Calu3 (cell line): ENCODE measurements at regions of chr17 and their contacts with region 1.

Region 1: GRCh38 chr17:44219616-44220212 is at the start of gene UBTF:
- DNase-seq: peak; percentile 83
- H3K4me3 Mint-ChIP-seq: peak within 1 kb of the TSS; percentile 86
- H3K27ac Mint-ChIP-seq: peak within 1 kb of the TSS; percentile 79
- H3K4me1 Mint-ChIP-seq: peaks cover 37% of the 10 kb centered on the region
- H3K27me3 Mint-ChIP-seq: no peaks in the 10 kb centered on the region
- CTCF ChIP-seq: no peak
- total RNA-seq, gene UBTF: 92.1 and 94.2 TPM in 2 replicates

Region 2: DNA sequence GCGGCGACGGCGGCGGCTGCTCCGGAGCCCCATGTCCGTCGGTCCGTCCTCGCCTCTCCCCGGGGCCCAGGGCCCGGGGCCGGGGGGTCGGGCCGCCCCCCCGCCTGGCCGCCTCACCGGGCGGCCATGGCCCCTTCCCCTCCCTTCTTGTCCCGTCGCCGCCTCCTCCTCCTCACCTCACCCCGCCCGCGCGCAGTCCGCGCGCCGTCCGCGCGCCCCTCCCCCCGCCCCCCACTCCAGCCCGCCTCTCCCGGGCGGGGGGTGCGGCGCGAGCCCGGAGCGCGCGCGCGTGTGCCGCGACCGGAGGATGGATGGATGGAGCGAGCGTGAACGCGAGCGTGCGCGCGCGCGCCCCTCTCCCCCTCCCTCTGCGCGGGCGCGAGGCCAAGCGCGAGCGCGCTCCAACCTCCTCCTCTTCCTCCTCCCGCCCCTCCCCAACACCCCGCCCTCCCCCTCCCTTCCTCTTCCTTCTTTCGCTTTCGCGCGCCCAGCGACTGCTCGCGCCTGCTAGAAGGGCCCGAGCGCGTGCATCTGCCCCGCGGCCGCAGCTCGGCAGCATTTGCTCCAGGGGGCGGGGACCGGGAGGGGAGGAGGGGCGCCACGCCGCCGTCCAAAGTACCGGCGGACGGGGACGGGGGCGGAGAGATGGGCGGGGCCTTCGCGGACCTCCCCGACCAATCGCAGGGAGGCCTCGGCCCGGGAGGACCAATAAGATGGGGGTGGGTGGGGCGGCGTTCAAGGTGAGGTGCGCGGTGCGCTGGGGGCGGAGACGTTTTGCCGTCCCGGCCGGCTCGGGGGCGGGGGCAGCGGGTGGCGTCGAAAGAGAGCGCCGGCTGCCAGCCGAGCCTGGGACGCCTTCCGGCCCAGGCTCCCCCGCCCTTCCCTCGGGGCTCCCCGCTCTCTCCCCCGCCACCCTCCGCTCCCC is 19.9 kb before region 1 on chr17 and contains the start of gene ATXN7L3:
- CTCF ChIA-PET with region 1: interaction called, 8 read pairs
- intact Hi-C with region 1: loop called (anchors 1 kb)
- DNase-seq: peak; percentile 100
- H3K4me3 Mint-ChIP-seq: peak within 1 kb of the TSS; percentile 90
- H3K27ac Mint-ChIP-seq: peak within 1 kb of the TSS; percentile 90
- H3K4me1 Mint-ChIP-seq: peaks cover 42% of the 10 kb centered on the region
- H3K27me3 Mint-ChIP-seq: no peaks in the 10 kb centered on the region
- CTCF ChIP-seq: no peak
- total RNA-seq, gene ATXN7L3: 93.1 and 112 TPM in 2 replicates

Region 3: DNA sequence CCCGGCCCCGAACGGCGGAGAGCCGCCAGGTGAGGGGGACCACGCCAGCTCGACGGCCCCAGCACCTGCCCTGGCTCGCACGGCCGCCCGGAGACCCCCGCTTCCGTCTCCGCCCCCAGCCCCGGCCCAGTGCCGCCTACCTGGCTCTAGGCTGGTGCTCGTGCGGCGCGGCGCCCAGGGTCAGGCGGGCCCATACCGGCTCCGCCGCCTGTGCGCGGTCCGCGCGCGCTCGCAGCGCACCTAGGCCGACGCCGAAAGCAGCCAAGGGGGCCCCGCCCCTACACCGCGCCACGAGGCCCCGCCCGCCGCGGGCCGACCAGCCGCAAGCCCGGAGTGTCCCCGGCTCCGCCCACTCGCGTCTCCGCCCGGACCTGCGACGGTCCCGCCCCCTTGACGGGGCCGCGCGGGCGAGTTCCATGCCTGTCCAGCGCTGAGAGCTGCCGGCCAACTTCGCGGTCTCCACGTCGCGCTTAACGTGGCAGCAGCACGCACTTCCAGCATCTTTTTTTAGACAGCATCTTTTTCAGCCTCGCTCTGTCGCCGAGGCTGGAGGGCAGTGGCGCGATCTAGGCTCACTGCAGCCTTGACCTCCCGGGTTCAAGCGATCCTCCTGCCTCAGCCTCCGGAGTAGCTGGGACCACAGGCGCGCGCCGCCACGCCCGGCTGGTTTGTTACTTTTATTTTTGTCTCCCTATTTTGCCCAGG is 105.0 kb after region 1 on chr17 and contains the start of gene SLC25A39:
- CTCF ChIA-PET with region 1: interaction called, 9 read pairs
- intact Hi-C with region 1: loop called (anchors 5 kb)
- DNase-seq: peak; percentile 100
- H3K4me3 Mint-ChIP-seq: peak within 1 kb of the TSS; percentile 96
- H3K27ac Mint-ChIP-seq: peak within 1 kb of the TSS; percentile 94
- H3K4me1 Mint-ChIP-seq: peaks cover 7% of the 10 kb centered on the region
- H3K27me3 Mint-ChIP-seq: no peaks in the 10 kb centered on the region
- CTCF ChIP-seq: no peak
- total RNA-seq, gene SLC25A39: 271 and 297 TPM in 2 replicates

Region 4: DNA sequence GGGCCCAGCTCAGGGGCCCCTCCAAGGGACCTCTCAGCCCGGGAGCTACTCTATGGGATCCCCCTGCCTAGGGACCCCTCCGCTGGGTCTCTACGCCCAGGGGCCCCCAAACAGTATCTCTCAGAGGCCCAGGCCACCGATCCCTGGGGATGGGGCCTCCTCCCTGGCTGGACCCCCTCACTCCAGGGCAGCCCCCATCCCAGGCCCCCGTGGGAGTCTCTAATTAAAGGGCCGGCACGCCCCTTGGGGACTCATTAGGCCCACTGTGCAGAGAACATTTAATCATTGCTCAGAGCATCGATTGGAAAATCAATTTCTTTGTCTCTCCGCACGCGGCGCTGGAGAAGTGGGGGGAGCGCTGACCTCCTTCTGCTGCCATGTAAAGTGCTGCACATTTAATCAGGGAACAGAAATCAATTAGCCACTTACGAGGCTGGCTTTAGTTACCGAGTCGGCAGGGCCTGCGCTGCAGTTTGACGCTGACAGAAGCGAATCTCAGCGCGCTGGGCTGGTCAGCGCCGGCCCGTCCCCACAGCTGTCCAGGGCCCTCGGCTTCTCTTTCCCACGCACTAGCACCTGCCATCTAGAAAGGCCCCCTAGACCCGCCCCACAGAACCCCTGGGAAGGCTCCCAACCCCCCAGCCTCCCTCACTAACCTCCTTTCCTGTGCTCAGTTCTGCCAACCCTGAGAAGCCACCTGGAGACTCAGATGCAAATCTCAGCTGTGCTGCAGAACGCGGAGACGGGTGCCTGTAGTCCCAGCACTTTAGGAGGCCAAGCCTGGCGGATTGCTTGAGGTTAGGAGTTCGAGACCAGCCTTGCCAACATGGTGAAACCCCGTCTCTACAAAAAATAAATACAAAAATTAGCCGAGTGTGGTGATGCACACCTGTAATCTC is 768.6 kb after region 1 on chr17:
- CTCF ChIA-PET with region 1: no interaction called
- intact Hi-C with region 1: no loop called
- DNase-seq: peak; percentile 44
- H3K4me3 Mint-ChIP-seq: no peak overlapping the region
- H3K27ac Mint-ChIP-seq: no peak overlapping the region
- H3K4me1 Mint-ChIP-seq: peaks cover 8% of the 10 kb centered on the region
- H3K27me3 Mint-ChIP-seq: peaks cover 69% of the 10 kb centered on the region
- CTCF ChIP-seq: no peak